ENCODE measurements at regions of chr17 and their contacts with region 1.

Region 1: DNA sequence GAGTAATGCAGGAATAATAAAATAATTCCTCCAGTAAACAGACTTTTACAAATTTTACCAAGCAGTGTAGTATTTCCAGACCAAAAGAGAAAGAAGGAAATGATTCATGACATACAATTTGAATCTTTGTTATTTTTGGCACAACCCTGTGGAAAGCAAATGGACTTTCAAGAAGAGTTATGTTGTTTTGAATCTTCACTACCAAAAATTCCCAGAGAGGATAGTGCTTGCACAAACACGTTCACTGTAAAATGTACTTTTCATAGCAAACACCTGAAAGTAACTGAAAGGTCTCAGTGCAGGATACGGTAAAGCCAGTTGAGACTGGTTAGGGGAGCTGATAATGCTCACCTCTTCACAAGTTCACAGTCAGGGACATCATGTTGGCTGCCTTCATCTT is 107.1 kb downstream of the USP22 start:
- DNase-seq: peak; percentile 89
- H3K4me3 Mint-ChIP-seq: peak overlapping the region; percentile 51
- H3K27ac Mint-ChIP-seq: peak overlapping the region; percentile 87
- H3K4me1 Mint-ChIP-seq: peaks cover 20% of the 10 kb centered on the region
- H3K27me3 Mint-ChIP-seq: no peaks in the 10 kb centered on the region
- CTCF ChIP-seq: no peak

Region 2: GRCh38 chr17:20908373-20909273 is 27.1 kb before region 1 on chr17:
- CTCF ChIA-PET with region 1: interaction called, 4 read pairs
- POLR2A ChIA-PET with region 1: interaction called, 14 read pairs
- intact Hi-C with region 1: loop called (anchors 1 kb)
- DNase-seq: peak; percentile 79
- H3K4me3 Mint-ChIP-seq: peak overlapping the region; percentile 73
- H3K27ac Mint-ChIP-seq: peak overlapping the region; percentile 51
- H3K4me1 Mint-ChIP-seq: peaks cover 10% of the 10 kb centered on the region
- H3K27me3 Mint-ChIP-seq: no peaks in the 10 kb centered on the region
- CTCF ChIP-seq: peak; percentile 60

Region 3: GRCh38 chr17:20955427-20956323 is 19.9 kb after region 1 on chr17:
- CTCF ChIA-PET with region 1: no interaction called
- POLR2A ChIA-PET with region 1: interaction called, 19 read pairs
- intact Hi-C with region 1: no loop called
- DNase-seq: peak; percentile 77
- H3K4me3 Mint-ChIP-seq: no peak overlapping the region
- H3K27ac Mint-ChIP-seq: no peak overlapping the region
- H3K4me1 Mint-ChIP-seq: peaks cover 20% of the 10 kb centered on the region
- H3K27me3 Mint-ChIP-seq: no peaks in the 10 kb centered on the region
- CTCF ChIP-seq: no peak

Measured in MCF 10A (cell line).